A549 (cell line): ENCODE measurements at regions of chr2 and their contacts with region 1.

Region 1: GRCh38 chr2:75064691-75065396 is 106.4 kb downstream of the POLE4 start:
- DNase-seq: peak; percentile 42 to 58
- ATAC-seq: peak; percentile 75 to 93; a peak in 5 of 6 replicates
- H3K4me3 ChIP-seq: no peak overlapping the region
- H3K27ac ChIP-seq: no peak overlapping the region
- H3K4me1 ChIP-seq: no peaks in the 10 kb centered on the region
- CTCF ChIP-seq: peak; percentile 82
- EP300 ChIP-seq: no peak
- POLR2A ChIP-seq: no peak
- RAD21 ChIP-seq: peak; percentile 67 to 80

Region 2: GRCh38 chr2:75053484-75054112 is 11.2 kb before region 1 on chr2:
- CTCF ChIA-PET with region 1: interaction called, 14 read pairs
- POLR2A ChIA-PET with region 1: no interaction called
- DNase-seq: peak; percentile 52 to 62
- ATAC-seq: peak; percentile 98 to 100
- H3K4me3 ChIP-seq: no peak overlapping the region
- H3K27ac ChIP-seq: no peak overlapping the region
- H3K4me1 ChIP-seq: no peaks in the 10 kb centered on the region
- CTCF ChIP-seq: peak; percentile 74
- EP300 ChIP-seq: no peak
- POLR2A ChIP-seq: no peak
- RAD21 ChIP-seq: peak; percentile 70 to 83

Region 3: DNA sequence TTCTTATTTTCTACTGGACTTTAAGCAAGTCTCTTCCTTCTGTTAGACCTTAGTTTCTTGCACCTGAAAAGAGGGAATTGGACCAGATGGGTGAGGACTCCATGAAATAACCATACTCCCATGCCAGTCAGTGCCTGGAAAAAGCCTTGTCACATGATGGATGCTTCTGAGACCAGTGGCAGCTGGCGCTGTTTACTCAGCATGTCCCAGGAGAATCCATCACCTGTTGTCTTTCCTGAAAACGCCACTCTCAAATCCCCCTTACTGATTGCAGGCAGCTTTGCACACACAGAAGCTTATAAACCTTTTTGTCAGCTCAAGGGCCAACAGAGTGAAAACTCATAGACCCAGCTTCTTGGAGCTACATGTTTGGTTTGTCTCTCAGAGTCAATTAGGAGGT is 11.2 kb after region 1 on chr2:
- CTCF ChIA-PET with region 1: interaction called, 10 read pairs
- POLR2A ChIA-PET with region 1: no interaction called
- DNase-seq: no peak
- ATAC-seq: no peak
- H3K4me3 ChIP-seq: no peak overlapping the region
- H3K27ac ChIP-seq: no peak overlapping the region
- H3K4me1 ChIP-seq: no peaks in the 10 kb centered on the region
- CTCF ChIP-seq: no peak
- EP300 ChIP-seq: no peak
- POLR2A ChIP-seq: no peak
- RAD21 ChIP-seq: no peak

Region 4: DNA sequence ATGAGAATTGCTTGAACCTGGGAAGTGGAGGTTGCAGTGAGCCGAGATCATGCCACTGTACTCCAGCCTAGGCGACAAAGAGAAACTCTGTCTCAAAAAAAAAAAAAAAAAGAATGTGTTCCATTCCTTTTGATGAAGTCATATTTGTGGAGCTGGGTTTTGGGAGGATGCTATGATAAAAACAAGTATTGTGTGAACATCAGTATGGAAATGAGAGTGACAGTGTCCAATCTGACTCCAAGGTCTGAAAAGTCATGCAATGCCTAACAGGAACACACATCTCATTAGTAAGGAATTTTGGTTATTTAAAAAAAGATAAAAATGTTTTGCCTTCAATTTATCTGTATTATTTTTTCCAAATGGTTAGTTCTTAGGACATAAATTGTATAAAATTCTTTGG is 634.1 kb after region 1 on chr2:
- CTCF ChIA-PET with region 1: no interaction called
- POLR2A ChIA-PET with region 1: no interaction called
- DNase-seq: no peak
- ATAC-seq: no peak
- H3K4me3 ChIP-seq: no peak overlapping the region
- H3K27ac ChIP-seq: no peak overlapping the region
- H3K4me1 ChIP-seq: no peaks in the 10 kb centered on the region
- CTCF ChIP-seq: no peak
- EP300 ChIP-seq: no peak
- POLR2A ChIP-seq: no peak
- RAD21 ChIP-seq: no peak